Posterior cingulate gyrus (tissue), 11 donors: ENCODE measurements at regions of chr2 and their contacts with region 1.

Region 1: GRCh38 chr2:224039124-224039940 is at the start of gene SERPINE2:
- DNase-seq: peak; percentile 59 to 94 (median 72)

Region 2: GRCh38 chr2:223837287-223838061 is 201.9 kb before region 1 on chr2 and contains the start of gene AP1S3:
- intact Hi-C with region 1: no loop called
- DNase-seq: peak; percentile 28 to 94 (median 59)

Region 3: DNA sequence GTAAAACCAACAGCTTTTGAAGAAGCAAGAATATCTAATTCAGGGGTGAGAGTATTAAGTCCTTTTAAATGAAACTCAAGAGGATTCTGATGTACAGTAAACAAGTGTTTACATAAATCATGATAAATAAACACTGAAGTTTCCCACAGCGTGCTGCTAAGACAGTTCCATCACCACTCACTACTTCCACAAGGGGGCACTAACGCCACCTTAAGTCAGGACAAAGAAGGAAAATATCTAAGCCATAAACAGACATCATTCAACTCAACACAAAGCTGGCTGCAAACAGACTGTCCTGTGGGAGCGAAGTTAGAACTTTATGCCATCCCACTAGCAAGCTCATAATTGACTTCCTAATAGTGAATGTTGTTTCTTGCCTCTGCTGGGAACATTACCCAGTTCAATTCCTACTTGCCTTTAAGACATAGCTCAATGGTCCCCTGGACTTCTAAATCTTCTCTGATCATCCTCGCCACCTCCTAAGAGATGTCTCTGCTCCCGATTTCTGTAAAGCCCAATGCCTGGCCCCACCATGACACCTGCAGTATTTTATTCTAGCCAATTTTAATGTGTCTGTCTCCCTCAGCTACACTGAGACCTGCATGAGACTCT is 45.6 kb before region 1 on chr2:
- intact Hi-C with region 1: loop called (anchors 5 kb)
- DNase-seq: peak in 5 of 10 donors; percentile 33 to 69 (median 62)

Region 4: DNA sequence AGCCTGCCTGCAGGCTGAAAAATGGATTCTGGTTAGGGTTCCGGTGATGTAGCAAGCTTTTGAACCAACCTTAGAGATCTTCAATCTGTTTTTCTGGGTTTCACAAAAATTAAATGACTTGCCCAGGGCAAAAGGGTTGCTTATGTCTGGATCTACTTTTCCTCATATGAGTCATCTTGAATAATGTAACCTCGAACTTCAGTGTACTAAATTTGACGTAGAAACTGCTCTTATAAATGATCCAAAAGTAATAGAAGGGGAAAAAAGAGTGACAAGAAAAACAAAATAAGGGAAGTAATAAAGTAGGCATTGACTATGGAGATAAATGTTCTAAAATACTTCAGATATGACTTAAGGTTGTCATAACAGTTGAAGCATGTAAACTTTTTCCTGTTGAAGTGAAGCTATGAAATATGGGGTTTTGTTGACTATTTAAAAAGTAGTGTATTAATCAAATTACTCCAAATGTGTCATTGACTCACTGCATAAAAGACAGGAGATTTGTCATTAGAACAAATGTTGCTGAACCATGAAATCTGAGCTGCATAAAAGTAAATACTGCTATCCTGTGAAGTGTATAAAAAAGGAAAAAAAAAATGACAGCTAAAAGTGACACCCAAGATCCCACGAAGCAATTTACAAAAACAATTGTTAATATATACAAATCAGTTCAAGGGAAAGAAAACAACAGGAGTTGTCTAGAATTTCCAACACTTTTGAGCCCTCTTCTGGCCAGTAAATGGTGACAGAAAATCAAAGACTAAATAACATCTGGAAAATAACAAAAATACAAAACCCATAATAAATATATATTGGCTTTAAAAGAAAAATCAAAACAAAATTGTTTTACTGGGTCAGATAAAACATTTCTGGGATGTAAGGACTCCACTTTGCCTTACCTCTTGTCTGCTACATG is 103.3 kb after region 1 on chr2:
- intact Hi-C with region 1: loop called (anchors 5 kb)
- DNase-seq: no peak

Region 5: DNA sequence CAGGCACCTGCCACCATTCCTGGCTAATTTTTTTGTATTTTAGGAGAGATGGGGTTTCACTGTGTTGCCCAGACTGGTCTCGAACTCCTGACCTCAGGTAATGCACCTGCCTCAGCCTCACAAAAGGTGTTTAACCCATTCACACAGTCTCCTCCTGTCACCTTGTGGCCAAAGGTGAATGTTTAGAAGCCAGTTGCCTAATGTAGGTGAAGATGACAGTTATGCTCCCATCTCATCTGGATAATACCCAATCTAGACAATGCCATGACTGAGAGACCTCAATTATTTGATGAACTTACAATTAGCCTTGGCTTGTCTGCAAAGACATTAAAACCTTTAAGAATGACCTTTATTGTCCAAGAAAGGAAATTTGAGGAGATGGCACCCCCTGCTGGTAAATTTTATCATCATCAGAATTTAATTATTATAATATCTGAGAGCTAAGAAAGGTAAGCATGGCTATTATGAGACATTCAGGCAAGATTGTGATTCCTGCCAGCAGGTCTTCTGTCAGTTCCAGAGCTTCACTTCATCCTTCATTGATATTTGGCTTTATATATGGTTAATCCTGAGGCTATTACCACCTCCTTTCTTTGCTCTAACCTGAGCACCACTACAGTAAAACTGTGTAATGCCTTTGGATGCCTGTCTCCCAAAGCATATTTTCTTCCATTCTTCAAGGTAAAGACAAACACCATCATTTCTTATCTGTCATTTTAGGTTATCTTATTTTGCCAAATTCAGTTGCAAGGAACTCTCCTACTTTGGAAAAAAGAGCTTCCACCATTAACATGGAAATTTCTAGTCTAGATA is 245.0 kb after region 1 on chr2:
- intact Hi-C with region 1: loop called (anchors 1 kb)
- DNase-seq: no peak